ENCODE measurements at regions of chr4 and their contacts with region 1.

Region 1: DNA sequence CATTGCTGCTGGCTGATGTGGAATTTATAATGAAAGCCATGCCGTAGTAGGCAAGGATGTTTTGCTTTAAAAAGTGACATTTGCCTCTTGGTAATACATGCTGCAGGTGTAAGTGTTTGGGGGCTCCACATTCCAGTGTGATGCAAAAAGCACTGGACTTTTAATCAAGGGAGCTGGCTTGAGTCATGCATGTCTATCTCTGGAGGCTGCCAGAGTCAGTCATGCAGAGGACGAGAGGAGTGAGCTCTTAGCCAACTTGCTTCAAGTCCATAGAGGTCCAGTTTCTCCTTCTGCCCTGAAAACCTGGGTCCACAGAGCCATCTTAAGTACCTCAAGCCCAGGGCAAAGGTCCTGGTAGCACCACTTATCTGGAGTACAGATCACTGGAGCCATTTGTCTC is 11.6 kb upstream of the CXCL13 start:
- DNase-seq: no peak
- ATAC-seq: no peak
- H3K4me3 Mint-ChIP-seq: no peak overlapping the region
- H3K27ac Mint-ChIP-seq: peak overlapping the region; percentile 50
- H3K4me1 Mint-ChIP-seq: peaks cover 46% of the 10 kb centered on the region
- H3K27me3 Mint-ChIP-seq: peaks cover 15% of the 10 kb centered on the region
- CTCF ChIP-seq: no peak

Region 2: DNA sequence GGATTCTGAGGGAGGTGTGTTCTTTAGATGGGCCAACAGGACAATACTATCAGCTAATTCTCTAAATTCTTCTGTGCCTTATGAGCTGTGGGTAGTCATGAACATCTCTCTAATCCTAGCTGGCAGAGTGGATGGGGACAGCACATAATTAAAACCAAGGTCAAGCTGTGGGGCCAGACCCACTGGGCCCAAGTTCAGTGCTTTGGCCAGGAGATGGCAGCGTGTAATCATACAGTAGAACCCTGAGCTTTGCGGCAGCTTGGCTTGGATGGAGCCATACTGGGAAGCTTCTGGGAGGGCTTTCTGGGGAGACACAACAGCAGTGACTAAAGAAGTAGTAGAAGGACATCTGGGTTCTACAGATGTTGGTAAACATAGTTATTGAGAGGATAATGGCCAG is 128.7 kb before region 1 on chr4:
- CTCF ChIA-PET with region 1: interaction called, 17 read pairs
- POLR2A ChIA-PET with region 1: no interaction called
- intact Hi-C with region 1: no loop called
- DNase-seq: peak; percentile 52
- ATAC-seq: peak; percentile 49
- H3K4me3 Mint-ChIP-seq: no peak overlapping the region
- H3K27ac Mint-ChIP-seq: no peak overlapping the region
- H3K4me1 Mint-ChIP-seq: no peaks in the 10 kb centered on the region
- H3K27me3 Mint-ChIP-seq: peaks cover 6% of the 10 kb centered on the region
- CTCF ChIP-seq: peak; percentile 52

Measured in activated CD8-positive, alpha-beta T cell treated with anti-CD3 and anti-CD28 coated beads for 36 hours (primary cell).